Tibial artery (tissue), 4 donors: ENCODE measurements at regions of chr6 and their contacts with region 1.

Region 1: GRCh38 chr6:152648105-152648504 is 10.9 kb upstream of the SYNE1 start:
- DNase-seq: no peak
- H3K4me3 ChIP-seq: no peak overlapping the region
- H3K27ac ChIP-seq: no peak overlapping the region
- H3K4me1 ChIP-seq: no peaks in the 10 kb centered on the region
- H3K27me3 ChIP-seq: no peaks in the 10 kb centered on the region
- CTCF ChIP-seq: no peak

Region 2: DNA sequence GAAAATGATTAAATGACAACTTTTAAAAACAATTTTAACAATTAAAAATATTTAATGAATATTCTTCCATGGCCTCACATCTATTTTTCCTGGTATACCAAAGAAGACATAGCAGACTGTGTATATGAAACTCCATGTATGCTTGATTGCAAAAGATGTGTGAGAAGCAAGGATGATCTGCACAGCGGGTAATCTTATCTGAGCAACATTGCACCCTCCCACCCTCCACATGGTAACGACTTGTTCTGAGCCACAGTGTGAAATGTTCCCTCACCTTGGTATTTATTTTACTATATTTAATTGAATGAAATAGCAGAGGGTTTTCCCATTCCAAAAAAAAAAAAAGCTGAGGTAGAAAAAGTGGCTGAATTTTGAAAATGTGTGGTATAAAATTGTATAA is 215.3 kb before region 1 on chr6:
- intact Hi-C with region 1: no loop called
- DNase-seq: no peak
- H3K4me3 ChIP-seq: no peak overlapping the region
- H3K27ac ChIP-seq: no peak overlapping the region
- H3K4me1 ChIP-seq: peaks cover 0 to 9% (median 0%) of the 10 kb centered on the region in 4 donors
- H3K27me3 ChIP-seq: no peaks in the 10 kb centered on the region
- CTCF ChIP-seq: no peak

Region 3: DNA sequence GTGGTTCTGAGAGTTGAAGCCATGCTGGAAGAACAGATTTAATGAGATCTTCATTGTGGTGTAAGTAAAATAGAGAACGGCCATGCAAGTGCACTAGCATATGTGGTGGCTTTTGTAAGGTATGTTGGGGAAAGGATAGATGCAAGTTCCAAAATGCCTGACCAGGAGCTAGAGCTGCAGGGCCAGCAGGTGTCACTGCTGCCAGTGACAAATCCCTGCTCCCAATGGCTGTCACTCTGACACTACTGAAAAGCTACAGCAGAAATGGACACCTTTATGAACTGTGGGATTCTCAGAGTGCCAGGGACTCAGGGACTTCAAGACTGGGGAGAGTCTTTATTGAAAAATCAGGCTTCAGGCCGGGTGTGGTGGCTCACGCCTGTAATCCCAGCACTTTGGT is 79.4 kb after region 1 on chr6:
- intact Hi-C with region 1: loop called (anchors 2 kb)
- DNase-seq: no peak
- H3K4me3 ChIP-seq: no peak overlapping the region
- H3K27ac ChIP-seq: no peak overlapping the region
- H3K4me1 ChIP-seq: no peaks in the 10 kb centered on the region
- H3K27me3 ChIP-seq: no peaks in the 10 kb centered on the region
- CTCF ChIP-seq: no peak

Region 4: GRCh38 chr6:153002607-153003365 is 354.7 kb after region 1 on chr6 and contains the start of gene MTRF1L:
- intact Hi-C with region 1: no loop called
- DNase-seq: peak; percentile 93 to 96
- H3K4me3 ChIP-seq: peak within 1 kb of the TSS; percentile 67 to 91
- H3K27ac ChIP-seq: peak within 1 kb of the TSS; percentile 84 to 87
- H3K4me1 ChIP-seq: peaks cover 0 to 43% (median 23%) of the 10 kb centered on the region in 4 donors
- H3K27me3 ChIP-seq: no peaks in the 10 kb centered on the region
- CTCF ChIP-seq: no peak